Activated CD4-positive, alpha-beta memory T cell treated with anti-CD3 and anti-CD28 coated beads for 36 hours (primary cell): ENCODE measurements at regions of chr5 and their contacts with region 1.

Region 1: GRCh38 chr5:39217365-39218281 is 1.7 kb downstream of the FYB1 start:
- DNase-seq: peak; percentile 87
- H3K4me3 Mint-ChIP-seq: peak overlapping the region; percentile 83
- H3K27ac Mint-ChIP-seq: peak overlapping the region; percentile 96
- H3K4me1 Mint-ChIP-seq: peaks cover 69% of the 10 kb centered on the region
- H3K27me3 Mint-ChIP-seq: no peaks in the 10 kb centered on the region

Region 2: DNA sequence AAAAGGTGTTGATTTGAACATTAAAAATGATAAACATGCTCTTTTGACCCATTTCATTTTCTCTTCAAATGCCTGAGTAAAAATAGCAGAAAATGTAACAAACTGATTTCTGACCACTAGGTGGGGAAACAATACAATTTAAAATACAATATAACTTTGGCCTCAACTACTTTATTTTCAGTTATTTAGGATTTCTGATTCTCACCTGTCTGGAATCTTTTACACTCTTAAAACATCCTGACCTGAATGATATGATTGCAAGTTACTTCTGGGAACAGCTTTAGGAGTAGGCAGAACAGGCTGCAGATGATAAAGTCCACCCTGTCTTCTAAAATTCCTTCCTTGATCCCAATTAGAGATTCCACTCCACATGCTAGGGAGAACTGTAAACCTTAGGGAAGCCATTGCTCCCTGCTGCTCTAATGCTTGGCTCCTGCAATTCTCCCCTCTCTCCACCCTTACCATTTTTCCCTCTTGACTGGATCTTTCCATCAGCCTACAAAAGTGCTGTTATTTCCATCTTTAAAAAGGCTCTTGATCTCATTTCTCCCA is 68.6 kb before region 1 on chr5:
- CTCF ChIA-PET with region 1: interaction called, 21 read pairs
- POLR2A ChIA-PET with region 1: interaction called, 3 read pairs
- intact Hi-C with region 1: loop called (anchors 1 kb)
- DNase-seq: no peak
- H3K4me3 Mint-ChIP-seq: no peak overlapping the region
- H3K27ac Mint-ChIP-seq: peak overlapping the region; percentile 90
- H3K4me1 Mint-ChIP-seq: peaks cover 61% of the 10 kb centered on the region
- H3K27me3 Mint-ChIP-seq: no peaks in the 10 kb centered on the region

Region 3: GRCh38 chr5:39177631-39177964 is 40.0 kb before region 1 on chr5:
- CTCF ChIA-PET with region 1: interaction called, 22 read pairs
- POLR2A ChIA-PET with region 1: interaction called, 6 read pairs
- intact Hi-C with region 1: no loop called
- DNase-seq: no peak
- H3K4me3 Mint-ChIP-seq: peak overlapping the region; percentile 63
- H3K27ac Mint-ChIP-seq: peak overlapping the region; percentile 88
- H3K4me1 Mint-ChIP-seq: peaks cover 97% of the 10 kb centered on the region
- H3K27me3 Mint-ChIP-seq: no peaks in the 10 kb centered on the region

Region 4: DNA sequence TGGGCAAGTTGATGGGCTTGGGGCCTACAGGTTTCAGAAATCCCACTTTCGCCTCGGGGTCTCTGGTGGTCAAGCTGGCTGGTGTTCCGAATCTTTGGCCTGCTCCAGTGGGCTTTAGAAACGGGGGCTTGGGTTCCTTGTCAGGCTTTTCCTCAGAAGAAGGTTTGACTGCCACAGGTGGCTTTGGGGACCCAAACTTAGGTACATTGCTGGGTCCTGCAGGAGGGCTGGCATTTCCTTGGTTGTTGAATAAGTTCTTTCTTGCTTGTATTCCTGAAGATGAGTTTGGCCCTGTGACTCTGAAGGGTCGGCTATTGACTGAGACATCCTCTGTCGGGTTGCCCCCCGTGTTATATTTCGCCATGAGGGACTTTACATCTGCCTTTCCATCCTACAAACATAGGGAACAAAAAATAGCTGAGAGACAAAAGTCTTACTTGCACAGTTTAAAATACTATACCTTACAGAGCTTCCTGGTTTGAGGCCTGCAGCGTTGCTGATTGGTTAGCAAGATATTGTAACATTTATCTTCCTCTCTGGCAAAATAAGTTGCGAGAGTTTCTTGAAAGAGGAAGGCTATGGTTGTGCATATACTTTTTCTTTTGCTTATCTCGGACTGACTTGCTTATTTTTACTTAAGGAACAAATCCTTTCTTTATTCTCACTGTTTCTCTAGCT is 14.9 kb before region 1 on chr5:
- CTCF ChIA-PET with region 1: interaction called, 75 read pairs
- POLR2A ChIA-PET with region 1: interaction called, 79 read pairs
- intact Hi-C with region 1: loop called (anchors 2 kb)
- DNase-seq: no peak
- H3K4me3 Mint-ChIP-seq: peak overlapping the region; percentile 88
- H3K27ac Mint-ChIP-seq: peak overlapping the region; percentile 95
- H3K4me1 Mint-ChIP-seq: peaks cover 39% of the 10 kb centered on the region
- H3K27me3 Mint-ChIP-seq: no peaks in the 10 kb centered on the region

Region 5: DNA sequence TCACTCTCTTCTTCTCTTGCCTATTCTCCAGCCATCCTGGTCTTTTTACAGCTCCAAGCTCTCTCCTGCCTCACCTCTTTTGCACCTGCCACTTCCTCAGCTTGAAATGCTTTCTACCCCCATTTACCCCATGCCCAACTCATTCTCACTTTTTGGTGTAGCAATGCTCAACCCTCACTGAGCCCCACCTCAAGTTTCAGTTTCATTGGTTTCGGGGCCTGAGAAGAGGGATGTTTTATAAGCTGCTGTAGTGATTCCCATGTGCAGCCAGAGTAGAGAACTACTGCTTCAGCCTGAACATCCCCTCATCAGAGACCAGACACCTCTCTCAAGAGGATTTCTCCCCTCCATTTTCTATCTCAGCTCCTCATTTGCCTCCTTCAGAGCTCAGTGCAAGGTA is 46.9 kb after region 1 on chr5:
- CTCF ChIA-PET with region 1: interaction called, 10 read pairs
- POLR2A ChIA-PET with region 1: no interaction called
- intact Hi-C with region 1: no loop called
- DNase-seq: peak; percentile 32
- H3K4me3 Mint-ChIP-seq: no peak overlapping the region
- H3K27ac Mint-ChIP-seq: no peak overlapping the region
- H3K4me1 Mint-ChIP-seq: peaks cover 14% of the 10 kb centered on the region
- H3K27me3 Mint-ChIP-seq: no peaks in the 10 kb centered on the region

Region 6: GRCh38 chr5:39376293-39376714 is 158.7 kb after region 1 on chr5:
- CTCF ChIA-PET with region 1: interaction called, 20 read pairs
- POLR2A ChIA-PET with region 1: no interaction called
- intact Hi-C with region 1: no loop called
- DNase-seq: peak; percentile 32
- H3K4me3 Mint-ChIP-seq: no peak overlapping the region
- H3K27ac Mint-ChIP-seq: no peak overlapping the region
- H3K4me1 Mint-ChIP-seq: no peaks in the 10 kb centered on the region
- H3K27me3 Mint-ChIP-seq: no peaks in the 10 kb centered on the region

Region 7: GRCh38 chr5:39399135-39400036 is 181.8 kb after region 1 on chr5:
- CTCF ChIA-PET with region 1: no interaction called
- POLR2A ChIA-PET with region 1: no interaction called
- intact Hi-C with region 1: no loop called
- DNase-seq: no peak
- H3K4me3 Mint-ChIP-seq: no peak overlapping the region
- H3K27ac Mint-ChIP-seq: no peak overlapping the region
- H3K4me1 Mint-ChIP-seq: no peaks in the 10 kb centered on the region
- H3K27me3 Mint-ChIP-seq: no peaks in the 10 kb centered on the region